Vagina (tissue), 2 donors: ENCODE measurements at regions of chr11 and their contacts with region 1.

Region 1: GRCh38 chr11:44949160-44950030 is 1.3 kb downstream of the TP53I11 start:
- DNase-seq: no peak
- H3K4me3 ChIP-seq: peak overlapping the region; percentile 71 to 75
- H3K27ac ChIP-seq: peak overlapping the region; percentile 79
- H3K4me1 ChIP-seq: peaks cover 9% of the 10 kb centered on the region
- H3K27me3 ChIP-seq: no peaks in the 10 kb centered on the region
- CTCF ChIP-seq: peak in 2 of 3 experiments; percentile 20 to 21
- POLR2A ChIP-seq: peak in 1 of 2 donors; percentile 20

Region 2: DNA sequence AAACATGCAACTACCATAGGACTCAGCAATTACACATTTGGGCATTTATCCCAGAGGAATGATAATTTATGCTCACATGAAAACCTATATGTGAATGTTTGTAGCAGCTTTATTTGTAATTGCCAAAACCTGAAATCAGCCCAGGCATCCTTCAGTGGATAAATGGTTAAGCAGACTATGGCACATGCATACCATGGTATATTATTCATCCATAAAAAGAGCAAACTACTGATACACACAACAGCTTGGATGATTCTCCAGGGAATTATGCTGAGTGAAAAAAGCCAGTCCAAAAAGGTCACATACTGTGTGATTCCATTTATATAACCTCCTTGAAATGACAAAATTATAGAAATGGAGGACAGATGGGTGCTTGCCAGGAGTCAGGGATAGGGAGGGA is 726.2 kb before region 1 on chr11:
- intact Hi-C with region 1: no loop called
- DNase-seq: no peak
- H3K4me3 ChIP-seq: no peak overlapping the region
- H3K27ac ChIP-seq: no peak overlapping the region
- H3K4me1 ChIP-seq: no peaks in the 10 kb centered on the region
- H3K27me3 ChIP-seq: no peaks in the 10 kb centered on the region
- CTCF ChIP-seq: no peak
- POLR2A ChIP-seq: no peak

Region 3: DNA sequence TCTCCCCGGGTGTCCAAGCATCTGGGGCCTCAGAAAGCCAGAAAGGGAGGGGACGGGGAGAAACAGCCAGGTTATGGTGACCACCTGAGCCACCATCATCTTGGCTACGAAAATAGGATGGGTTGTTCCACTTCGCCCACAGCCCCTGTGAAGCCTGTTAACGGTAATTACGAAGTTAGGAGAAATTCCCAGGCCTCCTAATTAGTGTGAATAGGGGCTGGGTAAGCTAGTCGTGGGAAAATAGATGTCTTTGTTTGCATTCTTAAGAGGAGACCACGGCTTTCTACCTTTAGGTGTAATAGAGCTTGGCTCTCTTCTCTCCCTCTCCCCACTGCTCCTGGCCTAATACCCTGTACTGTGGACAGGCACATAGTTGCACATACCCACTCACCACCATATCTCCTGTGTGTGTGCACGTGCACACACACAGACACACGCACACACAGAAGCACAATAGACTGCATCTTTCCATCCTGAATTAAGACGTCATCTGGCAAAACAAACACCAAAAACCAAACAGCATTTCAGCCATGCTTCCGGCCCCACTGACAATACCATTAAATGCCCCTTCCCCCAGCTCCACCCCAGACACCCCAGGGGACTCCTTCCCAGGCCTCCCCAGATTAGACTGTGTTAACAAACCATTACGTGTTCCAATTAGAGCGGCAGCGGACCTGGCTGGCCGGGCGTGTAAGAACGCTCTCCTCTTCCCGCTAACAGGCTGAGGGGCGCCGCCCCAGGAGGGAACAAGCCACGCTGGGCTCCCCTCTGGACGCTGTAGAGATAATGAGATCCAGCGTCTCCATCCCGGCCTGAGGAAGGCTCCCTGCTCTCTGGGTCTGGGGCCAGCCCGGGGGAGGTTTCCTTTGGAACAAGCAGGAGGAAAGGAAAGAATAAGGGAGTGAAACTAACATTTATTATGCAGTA is 71.6 kb before region 1 on chr11:
- intact Hi-C with region 1: no loop called
- DNase-seq: no peak
- H3K4me3 ChIP-seq: peak overlapping the region in 1 of 2 donors; percentile 23
- H3K27ac ChIP-seq: no peak overlapping the region
- H3K4me1 ChIP-seq: no peaks in the 10 kb centered on the region
- H3K27me3 ChIP-seq: no peaks in the 10 kb centered on the region
- CTCF ChIP-seq: no peak
- POLR2A ChIP-seq: no peak

Region 4: GRCh38 chr11:45158198-45158731 is 208.9 kb after region 1 on chr11:
- intact Hi-C with region 1: no loop called
- DNase-seq: no peak
- H3K4me3 ChIP-seq: peak overlapping the region in 1 of 2 donors; percentile 7
- H3K27ac ChIP-seq: peak overlapping the region; percentile 87
- H3K4me1 ChIP-seq: peaks cover 92% of the 10 kb centered on the region
- H3K27me3 ChIP-seq: no peaks in the 10 kb centered on the region
- CTCF ChIP-seq: no peak
- POLR2A ChIP-seq: no peak

Region 5: GRCh38 chr11:45339729-45340519 is 390.5 kb after region 1 on chr11:
- intact Hi-C with region 1: loop called (anchors 10 kb)
- DNase-seq: peak; percentile 92 to 96
- H3K4me3 ChIP-seq: peak overlapping the region; percentile 21 to 30
- H3K27ac ChIP-seq: peak overlapping the region; percentile 40
- H3K4me1 ChIP-seq: peaks cover 22% of the 10 kb centered on the region
- H3K27me3 ChIP-seq: no peaks in the 10 kb centered on the region
- CTCF ChIP-seq: peak; percentile 89 to 90 (median 89)
- POLR2A ChIP-seq: no peak